ENCODE measurements at regions of chr14 and their contacts with region 1.

Region 1: GRCh38 chr14:49505041-49505766 is 81.0 kb downstream of the RPS29 start:
- DNase-seq: peak; percentile 77 to 99
- H3K4me3 ChIP-seq: no peak overlapping the region
- H3K27ac ChIP-seq: peak overlapping the region; percentile 90
- H3K4me1 ChIP-seq: peaks cover 31% of the 10 kb centered on the region
- H3K27me3 ChIP-seq: no peaks in the 10 kb centered on the region
- CTCF ChIP-seq: no peak

Region 2: GRCh38 chr14:49427117-49427516 is 78.1 kb before region 1 on chr14:
- CTCF ChIA-PET with region 1: no interaction called
- POLR2A ChIA-PET with region 1: no interaction called
- intact Hi-C with region 1: no loop called
- DNase-seq: no peak
- H3K4me3 ChIP-seq: no peak overlapping the region
- H3K27ac ChIP-seq: no peak overlapping the region
- H3K4me1 ChIP-seq: no peaks in the 10 kb centered on the region
- H3K27me3 ChIP-seq: no peaks in the 10 kb centered on the region
- CTCF ChIP-seq: no peak

Region 3: GRCh38 chr14:49545073-49545472 is 39.9 kb after region 1 on chr14:
- CTCF ChIA-PET with region 1: interaction called, 3 read pairs
- POLR2A ChIA-PET with region 1: no interaction called
- intact Hi-C with region 1: loop called (anchors 1 kb)
- DNase-seq: peak; percentile 9 to 68
- H3K4me3 ChIP-seq: no peak overlapping the region
- H3K27ac ChIP-seq: no peak overlapping the region
- H3K4me1 ChIP-seq: peaks cover 13% of the 10 kb centered on the region
- H3K27me3 ChIP-seq: no peaks in the 10 kb centered on the region
- CTCF ChIP-seq: no peak

Region 4: DNA sequence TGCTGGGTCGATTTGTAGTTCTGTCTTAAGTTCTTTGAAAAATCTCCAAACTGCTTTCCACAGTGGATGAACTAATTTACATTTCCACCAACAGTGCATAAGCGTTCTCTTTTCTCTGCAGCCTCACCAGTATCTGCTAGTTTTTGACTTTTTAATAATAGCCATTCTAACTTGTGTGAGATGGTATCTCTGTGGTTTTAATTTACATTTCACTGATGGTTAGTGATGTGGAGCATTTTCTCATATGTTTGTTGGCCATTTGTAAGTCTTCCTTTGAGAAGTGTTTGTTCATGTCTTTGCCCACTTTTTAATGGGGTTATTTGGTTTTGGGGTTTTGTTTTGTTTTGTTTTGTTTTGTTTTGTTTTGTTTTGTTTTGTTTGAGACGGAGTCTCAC is 55.2 kb after region 1 on chr14:
- CTCF ChIA-PET with region 1: no interaction called
- POLR2A ChIA-PET with region 1: no interaction called
- intact Hi-C with region 1: no loop called
- DNase-seq: no peak
- H3K4me3 ChIP-seq: no peak overlapping the region
- H3K27ac ChIP-seq: no peak overlapping the region
- H3K4me1 ChIP-seq: no peaks in the 10 kb centered on the region
- H3K27me3 ChIP-seq: no peaks in the 10 kb centered on the region
- CTCF ChIP-seq: no peak